ENCODE measurements at regions of chr2 and their contacts with region 1.

Region 1: DNA sequence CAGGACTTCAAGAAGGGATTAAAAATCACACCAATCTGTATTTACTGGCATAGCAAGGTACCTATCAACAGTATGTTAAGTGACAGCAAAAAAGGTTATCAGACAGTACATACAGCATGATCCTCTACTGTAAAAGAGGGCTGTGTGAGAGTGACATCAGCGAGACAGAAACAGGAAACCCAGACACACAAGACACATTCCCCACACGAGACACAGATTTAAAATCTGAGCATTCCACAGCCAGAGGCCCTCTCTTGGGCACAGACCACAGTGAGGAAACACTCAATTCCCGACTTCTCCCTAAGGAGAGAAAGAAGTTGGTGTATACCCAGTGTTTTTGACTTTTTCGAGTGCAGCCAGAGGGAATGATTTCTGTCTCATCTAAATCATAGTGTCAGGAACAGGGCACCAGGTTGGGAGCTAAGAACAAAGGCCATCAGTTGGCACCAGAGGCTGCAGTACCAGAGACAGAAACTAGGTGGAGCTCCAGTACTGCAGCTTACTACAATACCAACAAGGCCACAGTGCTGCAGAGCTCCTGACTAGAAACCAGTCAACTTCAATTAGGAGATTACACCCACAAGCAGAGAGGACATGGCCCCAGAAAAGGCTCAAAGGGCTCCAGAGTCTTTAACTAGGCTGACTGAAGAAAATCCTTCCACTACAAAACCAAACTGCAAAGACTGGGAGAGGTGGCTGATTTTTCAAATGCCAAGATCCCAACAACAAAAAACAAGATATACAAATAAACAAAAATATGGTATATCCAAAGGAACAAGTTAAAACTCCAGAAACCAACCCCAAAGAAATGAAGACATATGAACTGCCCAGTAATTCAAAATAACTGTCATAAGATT is 41.0 kb downstream of the UNC50 start:
- DNase-seq: peak; percentile 85
- ATAC-seq: peak; percentile 96
- H3K4me3 Mint-ChIP-seq: no peak overlapping the region
- H3K27ac Mint-ChIP-seq: no peak overlapping the region
- H3K4me1 Mint-ChIP-seq: peaks cover 8% of the 10 kb centered on the region
- H3K27me3 Mint-ChIP-seq: no peaks in the 10 kb centered on the region
- CTCF ChIP-seq: peak; percentile 97

Region 2: GRCh38 chr2:98541906-98542305 is 107.5 kb before region 1 on chr2:
- CTCF ChIA-PET with region 1: no interaction called
- POLR2A ChIA-PET with region 1: no interaction called
- DNase-seq: no peak
- ATAC-seq: no peak
- H3K4me3 Mint-ChIP-seq: no peak overlapping the region
- H3K27ac Mint-ChIP-seq: no peak overlapping the region
- H3K4me1 Mint-ChIP-seq: no peaks in the 10 kb centered on the region
- H3K27me3 Mint-ChIP-seq: no peaks in the 10 kb centered on the region
- CTCF ChIP-seq: no peak

Region 3: GRCh38 chr2:98615481-98615880 is 33.9 kb before region 1 on chr2:
- CTCF ChIA-PET with region 1: no interaction called
- POLR2A ChIA-PET with region 1: no interaction called
- DNase-seq: peak; percentile 15
- ATAC-seq: peak; percentile 53
- H3K4me3 Mint-ChIP-seq: no peak overlapping the region
- H3K27ac Mint-ChIP-seq: no peak overlapping the region
- H3K4me1 Mint-ChIP-seq: no peaks in the 10 kb centered on the region
- H3K27me3 Mint-ChIP-seq: no peaks in the 10 kb centered on the region
- CTCF ChIP-seq: no peak

Region 4: GRCh38 chr2:98634401-98635092 is 14.8 kb before region 1 on chr2:
- CTCF ChIA-PET with region 1: interaction called, 29 read pairs
- POLR2A ChIA-PET with region 1: no interaction called
- DNase-seq: peak; percentile 72
- ATAC-seq: peak; percentile 98
- H3K4me3 Mint-ChIP-seq: no peak overlapping the region
- H3K27ac Mint-ChIP-seq: peak overlapping the region; percentile 24; the same call in 1 of the 2 replicates
- H3K4me1 Mint-ChIP-seq: peaks cover 11% of the 10 kb centered on the region
- H3K27me3 Mint-ChIP-seq: no peaks in the 10 kb centered on the region; the same call in 1 of the 2 replicates
- CTCF ChIP-seq: peak; percentile 21; the same call in 1 of the 2 replicates

Region 5: DNA sequence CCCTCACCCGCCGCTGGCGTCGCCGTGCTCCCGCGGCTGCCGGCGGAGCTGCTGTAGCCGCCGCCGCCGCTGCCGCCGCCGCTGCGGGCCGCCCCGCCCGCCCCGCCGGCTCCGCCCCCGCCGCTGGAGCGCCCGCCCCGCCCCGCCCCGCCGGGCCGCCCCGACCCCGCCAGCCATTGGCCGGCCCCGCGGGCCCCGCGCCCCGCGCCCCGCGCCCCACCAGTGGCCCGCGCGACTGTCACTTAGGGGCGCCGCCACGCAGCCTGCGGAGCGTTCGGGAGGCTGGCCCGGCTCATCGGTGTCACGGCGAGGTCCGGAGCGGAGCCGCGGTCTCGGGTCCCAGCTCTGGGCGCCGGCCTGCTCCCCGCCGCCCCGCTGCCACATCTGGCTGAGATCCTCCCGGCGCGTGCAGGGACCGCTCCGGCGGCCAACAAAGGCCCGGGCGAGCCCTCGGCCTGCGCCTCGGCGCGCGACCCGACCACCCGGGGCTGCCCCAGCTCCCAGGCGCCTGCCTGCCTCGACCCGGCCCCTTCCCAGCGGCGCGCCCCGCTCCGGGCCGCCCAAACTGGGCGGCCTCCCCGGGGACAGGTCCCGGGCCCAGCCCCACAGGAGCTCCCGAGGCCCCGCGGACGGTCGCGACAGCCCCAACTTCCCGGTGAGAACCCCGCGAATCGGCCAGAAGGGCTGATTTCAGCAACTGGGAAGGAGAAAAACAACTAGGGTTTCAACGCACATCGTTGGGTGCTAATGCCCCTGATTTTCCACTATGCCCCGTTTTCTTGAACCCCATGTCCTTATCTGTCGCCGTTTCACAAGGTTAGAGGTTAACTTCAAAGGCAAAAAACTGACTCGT is 81.9 kb after region 1 on chr2 and contains the start of gene MGAT4A:
- CTCF ChIA-PET with region 1: interaction called, 15 read pairs
- POLR2A ChIA-PET with region 1: no interaction called
- DNase-seq: peak; percentile 48
- ATAC-seq: peak; percentile 77
- H3K4me3 Mint-ChIP-seq: peak within 1 kb of the TSS; percentile 74
- H3K27ac Mint-ChIP-seq: no peak within 1 kb of the TSS
- H3K4me1 Mint-ChIP-seq: peaks cover 15% of the 10 kb centered on the region
- H3K27me3 Mint-ChIP-seq: peaks cover 63% of the 10 kb centered on the region
- CTCF ChIP-seq: no peak
- total RNA-seq, gene MGAT4A: 6.2 to 7.7 TPM (median 6.7 TPM) in 3 replicates

Region 6: GRCh38 chr2:98822301-98823164 is 173.2 kb after region 1 on chr2:
- CTCF ChIA-PET with region 1: interaction called, 31 read pairs
- POLR2A ChIA-PET with region 1: no interaction called
- DNase-seq: peak; percentile 72
- ATAC-seq: peak; percentile 87
- H3K4me3 Mint-ChIP-seq: peak overlapping the region; percentile 49
- H3K27ac Mint-ChIP-seq: no peak overlapping the region
- H3K4me1 Mint-ChIP-seq: peaks cover 5% of the 10 kb centered on the region; the same call in 1 of the 2 replicates
- H3K27me3 Mint-ChIP-seq: peaks cover 44% of the 10 kb centered on the region
- CTCF ChIP-seq: no peak; the same call in 1 of the 2 replicates

Region 7: GRCh38 chr2:98923244-98923940 is 274.0 kb after region 1 on chr2:
- CTCF ChIA-PET with region 1: interaction called, 12 read pairs
- POLR2A ChIA-PET with region 1: no interaction called
- DNase-seq: no peak
- ATAC-seq: no peak
- H3K4me3 Mint-ChIP-seq: no peak overlapping the region
- H3K27ac Mint-ChIP-seq: no peak overlapping the region
- H3K4me1 Mint-ChIP-seq: peaks cover 14% of the 10 kb centered on the region
- H3K27me3 Mint-ChIP-seq: no peaks in the 10 kb centered on the region
- CTCF ChIP-seq: peak; percentile 53

Region 8: GRCh38 chr2:99066075-99066958 is 417.0 kb after region 1 on chr2:
- CTCF ChIA-PET with region 1: interaction called, 31 read pairs
- POLR2A ChIA-PET with region 1: no interaction called
- DNase-seq: no peak
- ATAC-seq: peak; percentile 86
- H3K4me3 Mint-ChIP-seq: no peak overlapping the region
- H3K27ac Mint-ChIP-seq: no peak overlapping the region
- H3K4me1 Mint-ChIP-seq: no peaks in the 10 kb centered on the region
- H3K27me3 Mint-ChIP-seq: no peaks in the 10 kb centered on the region
- CTCF ChIP-seq: peak; percentile 31

Measured in WTC11 (cell line).